Activated B cell treated with CpG ODN at 0.5 μM for 24 hours (primary cell): ENCODE measurements at regions of chr12 and their contacts with region 1.

Region 1: DNA sequence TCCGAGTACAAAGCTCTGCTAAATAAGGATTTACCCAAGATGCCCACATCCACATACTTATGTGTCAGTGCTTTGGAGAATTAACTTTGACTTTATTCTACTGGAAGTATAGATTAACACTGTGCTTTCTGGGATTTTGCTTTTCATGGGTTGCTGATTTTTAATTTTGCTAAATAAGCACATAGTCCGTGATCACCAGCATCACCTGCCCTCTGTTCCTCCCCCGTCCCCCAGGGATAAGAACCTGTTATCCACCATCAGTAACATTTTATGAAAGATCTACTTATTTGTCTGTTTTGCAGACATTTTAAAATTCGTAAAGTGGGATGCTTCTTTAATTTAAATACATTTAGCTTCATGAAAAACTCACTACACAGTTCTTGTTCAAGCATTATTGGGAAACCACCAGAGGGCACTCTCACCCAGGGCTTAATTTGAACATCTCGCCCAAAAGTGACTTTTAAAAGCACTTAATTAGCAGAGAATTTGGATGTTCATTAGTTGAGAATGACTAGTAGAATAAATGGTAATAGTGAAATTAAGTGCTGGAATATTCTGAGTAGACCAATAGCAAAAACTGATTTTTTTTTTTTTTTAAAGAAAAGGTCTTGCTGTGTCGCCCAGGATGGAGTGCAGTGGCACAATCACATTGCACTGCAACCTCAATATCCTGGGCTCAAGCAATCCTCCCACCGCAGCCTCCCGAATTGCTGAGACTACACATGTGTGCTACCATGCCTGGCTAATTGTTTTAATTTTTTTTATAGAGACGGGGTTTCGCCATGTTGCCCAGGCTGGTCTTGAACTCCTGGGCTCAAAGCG is 35.7 kb downstream of the MRPL42 start:
- DNase-seq: no peak
- ATAC-seq: no peak
- H3K4me3 Mint-ChIP-seq: no peak overlapping the region
- H3K27ac Mint-ChIP-seq: no peak overlapping the region
- H3K4me1 Mint-ChIP-seq: no peaks in the 10 kb centered on the region
- H3K27me3 Mint-ChIP-seq: no peaks in the 10 kb centered on the region
- CTCF ChIP-seq: peak; percentile 78

Region 2: GRCh38 chr12:93514853-93515252 is 11.8 kb after region 1 on chr12:
- CTCF ChIA-PET with region 1: interaction called, 26 read pairs
- POLR2A ChIA-PET with region 1: no interaction called
- intact Hi-C with region 1: no loop called
- DNase-seq: no peak
- ATAC-seq: no peak
- H3K4me3 Mint-ChIP-seq: no peak overlapping the region
- H3K27ac Mint-ChIP-seq: no peak overlapping the region
- H3K4me1 Mint-ChIP-seq: no peaks in the 10 kb centered on the region
- H3K27me3 Mint-ChIP-seq: no peaks in the 10 kb centered on the region
- CTCF ChIP-seq: no peak

Region 3: GRCh38 chr12:93526786-93527428 is 23.9 kb after region 1 on chr12:
- CTCF ChIA-PET with region 1: no interaction called
- POLR2A ChIA-PET with region 1: no interaction called
- intact Hi-C with region 1: no loop called
- DNase-seq: no peak
- ATAC-seq: no peak
- H3K4me3 Mint-ChIP-seq: no peak overlapping the region
- H3K27ac Mint-ChIP-seq: no peak overlapping the region
- H3K4me1 Mint-ChIP-seq: peaks cover 2% of the 10 kb centered on the region
- H3K27me3 Mint-ChIP-seq: peaks cover 18% of the 10 kb centered on the region
- CTCF ChIP-seq: no peak

Region 4: DNA sequence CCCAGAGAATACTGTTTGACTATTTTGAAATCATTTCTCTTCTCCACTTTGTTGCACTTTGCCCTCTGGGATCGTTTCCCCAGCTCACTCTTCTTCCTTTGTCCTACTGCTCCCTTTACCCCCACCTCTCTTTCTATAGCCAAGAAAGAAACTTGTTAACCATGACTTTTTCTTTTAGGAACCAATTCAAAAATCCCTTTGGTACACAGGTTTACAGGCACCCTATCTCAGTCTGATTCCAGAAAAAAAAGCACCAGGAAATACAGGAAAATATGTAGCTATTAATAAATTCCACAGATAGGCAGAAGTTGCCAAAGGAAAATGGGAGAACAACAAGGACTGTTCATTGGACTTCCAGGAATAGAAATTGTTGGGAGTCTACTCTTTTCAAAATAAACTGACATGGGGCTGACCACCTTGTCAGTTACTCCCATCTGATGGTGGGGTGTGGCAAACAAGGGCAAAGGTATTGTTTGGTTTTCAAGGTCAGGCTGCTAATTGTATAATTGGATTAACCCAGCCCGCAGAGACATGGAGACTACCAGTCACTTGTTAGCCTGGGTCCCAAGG is 256.6 kb after region 1 on chr12:
- CTCF ChIA-PET with region 1: no interaction called
- POLR2A ChIA-PET with region 1: no interaction called
- intact Hi-C with region 1: no loop called
- DNase-seq: no peak
- ATAC-seq: no peak
- H3K4me3 Mint-ChIP-seq: no peak overlapping the region
- H3K27ac Mint-ChIP-seq: no peak overlapping the region
- H3K4me1 Mint-ChIP-seq: peaks cover 7% of the 10 kb centered on the region
- H3K27me3 Mint-ChIP-seq: no peaks in the 10 kb centered on the region
- CTCF ChIP-seq: no peak

Region 5: DNA sequence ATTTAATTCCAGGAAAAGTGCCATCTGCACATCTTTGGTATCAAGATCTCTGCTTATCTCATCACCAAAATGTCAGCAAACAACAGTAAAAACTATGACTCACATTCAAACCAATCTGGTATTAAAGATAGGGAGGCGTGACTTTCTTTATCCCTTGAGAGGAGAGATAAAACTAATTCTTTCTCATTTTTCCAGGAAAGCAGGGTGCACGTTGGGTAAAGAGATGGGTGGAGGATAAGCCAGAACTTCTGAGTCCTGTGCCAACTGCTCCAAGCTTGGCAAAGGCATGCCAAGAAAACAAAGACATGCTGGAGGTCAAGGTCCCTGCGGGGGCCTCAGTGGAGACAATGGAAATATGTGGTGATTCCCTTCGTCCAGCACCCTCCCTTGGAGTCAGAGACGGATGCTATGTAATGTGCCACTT is 419.6 kb after region 1 on chr12:
- CTCF ChIA-PET with region 1: no interaction called
- POLR2A ChIA-PET with region 1: no interaction called
- intact Hi-C with region 1: no loop called
- DNase-seq: no peak
- ATAC-seq: no peak
- H3K4me3 Mint-ChIP-seq: no peak overlapping the region
- H3K27ac Mint-ChIP-seq: no peak overlapping the region
- H3K4me1 Mint-ChIP-seq: no peaks in the 10 kb centered on the region
- H3K27me3 Mint-ChIP-seq: no peaks in the 10 kb centered on the region
- CTCF ChIP-seq: no peak

Region 6: DNA sequence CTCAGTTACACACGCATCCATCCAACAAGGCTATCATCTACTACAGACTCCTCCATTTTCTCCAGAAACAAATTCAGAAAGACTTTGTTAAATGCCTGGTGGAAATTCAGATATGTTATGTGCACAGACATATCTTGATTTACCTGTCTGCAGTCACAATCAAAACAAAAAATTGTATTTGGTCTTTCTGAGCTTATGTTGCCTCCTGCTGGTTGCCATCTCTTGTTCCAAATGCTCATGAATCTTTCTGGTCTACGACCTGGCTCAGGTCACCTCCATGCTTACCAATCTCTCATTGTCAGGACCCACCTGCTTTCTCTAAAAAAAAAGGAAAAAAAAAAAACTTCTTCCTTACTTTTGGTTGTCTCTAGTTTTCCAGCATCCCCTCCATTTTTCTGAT is 476.2 kb after region 1 on chr12:
- CTCF ChIA-PET with region 1: interaction called, 6 read pairs
- POLR2A ChIA-PET with region 1: no interaction called
- intact Hi-C with region 1: loop called (anchors 1 kb)
- DNase-seq: no peak
- ATAC-seq: no peak
- H3K4me3 Mint-ChIP-seq: no peak overlapping the region
- H3K27ac Mint-ChIP-seq: no peak overlapping the region
- H3K4me1 Mint-ChIP-seq: no peaks in the 10 kb centered on the region
- H3K27me3 Mint-ChIP-seq: peaks cover 6% of the 10 kb centered on the region
- CTCF ChIP-seq: no peak

Region 7: GRCh38 chr12:94112132-94112531 is 609.1 kb after region 1 on chr12:
- CTCF ChIA-PET with region 1: interaction called, 18 read pairs
- POLR2A ChIA-PET with region 1: no interaction called
- intact Hi-C with region 1: no loop called
- DNase-seq: no peak
- ATAC-seq: no peak
- H3K4me3 Mint-ChIP-seq: no peak overlapping the region
- H3K27ac Mint-ChIP-seq: no peak overlapping the region
- H3K4me1 Mint-ChIP-seq: no peaks in the 10 kb centered on the region
- H3K27me3 Mint-ChIP-seq: no peaks in the 10 kb centered on the region
- CTCF ChIP-seq: no peak

Region 8: GRCh38 chr12:94532490-94533422 is 1029.7 kb after region 1 on chr12:
- CTCF ChIA-PET with region 1: no interaction called
- POLR2A ChIA-PET with region 1: no interaction called
- intact Hi-C with region 1: loop called (anchors 2 kb)
- DNase-seq: peak; percentile 63
- ATAC-seq: peak; percentile 88
- H3K4me3 Mint-ChIP-seq: no peak overlapping the region
- H3K27ac Mint-ChIP-seq: no peak overlapping the region
- H3K4me1 Mint-ChIP-seq: peaks cover 5% of the 10 kb centered on the region
- H3K27me3 Mint-ChIP-seq: peaks cover 9% of the 10 kb centered on the region
- CTCF ChIP-seq: no peak